SK-N-SH (cell line): ENCODE measurements at regions of chr9 and their contacts with region 1.

Region 1: GRCh38 chr9:105700668-105701067 is 6.3 kb downstream of the TMEM38B start:
- DNase-seq: no peak
- H3K4me3 ChIP-seq: no peak overlapping the region
- H3K27ac ChIP-seq: no peak overlapping the region
- H3K4me1 ChIP-seq: no peaks in the 10 kb centered on the region; a peak in 1 of 4 replicates
- H3K27me3 ChIP-seq: no peaks in the 10 kb centered on the region
- CTCF ChIP-seq: no peak
- EP300 ChIP-seq: no peak
- RAD21 ChIP-seq: no peak

Region 2: GRCh38 chr9:105264380-105264779 is 436.3 kb before region 1 on chr9:
- CTCF ChIA-PET with region 1: no interaction called
- POLR2A ChIA-PET with region 1: no interaction called
- DNase-seq: no peak
- H3K4me3 ChIP-seq: no peak overlapping the region
- H3K27ac ChIP-seq: no peak overlapping the region
- H3K4me1 ChIP-seq: peaks cover 0 to 5% of the 10 kb centered on the region in 2 experiments; a peak in 1 of 4 replicates
- H3K27me3 ChIP-seq: no peaks in the 10 kb centered on the region
- CTCF ChIP-seq: no peak
- EP300 ChIP-seq: no peak
- RAD21 ChIP-seq: no peak

Region 3: GRCh38 chr9:105713260-105714019 is 12.8 kb after region 1 on chr9:
- CTCF ChIA-PET with region 1: interaction called, 11 read pairs
- POLR2A ChIA-PET with region 1: no interaction called
- DNase-seq: no peak
- H3K4me3 ChIP-seq: no peak overlapping the region
- H3K27ac ChIP-seq: no peak overlapping the region
- H3K4me1 ChIP-seq: no peaks in the 10 kb centered on the region
- H3K27me3 ChIP-seq: no peaks in the 10 kb centered on the region
- CTCF ChIP-seq: no peak
- EP300 ChIP-seq: no peak
- RAD21 ChIP-seq: no peak